ENCODE measurements at regions of chr11 and their contacts with region 1.

Region 1: GRCh38 chr11:15770798-15771414 is 585.4 kb downstream of the SOX6 start:
- H3K4me3 Mint-ChIP-seq: no peak overlapping the region
- H3K27ac Mint-ChIP-seq: peak overlapping the region; percentile 65
- H3K4me1 Mint-ChIP-seq: peaks cover 60% of the 10 kb centered on the region
- H3K27me3 Mint-ChIP-seq: peaks cover 19% of the 10 kb centered on the region

Region 2: GRCh38 chr11:15800111-15800800 is 29.4 kb after region 1 on chr11:
- intact Hi-C with region 1: loop called (anchors 5 kb)
- H3K4me3 Mint-ChIP-seq: peak overlapping the region; percentile 49
- H3K27ac Mint-ChIP-seq: peak overlapping the region; percentile 96
- H3K4me1 Mint-ChIP-seq: peaks cover 45% of the 10 kb centered on the region
- H3K27me3 Mint-ChIP-seq: no peaks in the 10 kb centered on the region

Region 3: DNA sequence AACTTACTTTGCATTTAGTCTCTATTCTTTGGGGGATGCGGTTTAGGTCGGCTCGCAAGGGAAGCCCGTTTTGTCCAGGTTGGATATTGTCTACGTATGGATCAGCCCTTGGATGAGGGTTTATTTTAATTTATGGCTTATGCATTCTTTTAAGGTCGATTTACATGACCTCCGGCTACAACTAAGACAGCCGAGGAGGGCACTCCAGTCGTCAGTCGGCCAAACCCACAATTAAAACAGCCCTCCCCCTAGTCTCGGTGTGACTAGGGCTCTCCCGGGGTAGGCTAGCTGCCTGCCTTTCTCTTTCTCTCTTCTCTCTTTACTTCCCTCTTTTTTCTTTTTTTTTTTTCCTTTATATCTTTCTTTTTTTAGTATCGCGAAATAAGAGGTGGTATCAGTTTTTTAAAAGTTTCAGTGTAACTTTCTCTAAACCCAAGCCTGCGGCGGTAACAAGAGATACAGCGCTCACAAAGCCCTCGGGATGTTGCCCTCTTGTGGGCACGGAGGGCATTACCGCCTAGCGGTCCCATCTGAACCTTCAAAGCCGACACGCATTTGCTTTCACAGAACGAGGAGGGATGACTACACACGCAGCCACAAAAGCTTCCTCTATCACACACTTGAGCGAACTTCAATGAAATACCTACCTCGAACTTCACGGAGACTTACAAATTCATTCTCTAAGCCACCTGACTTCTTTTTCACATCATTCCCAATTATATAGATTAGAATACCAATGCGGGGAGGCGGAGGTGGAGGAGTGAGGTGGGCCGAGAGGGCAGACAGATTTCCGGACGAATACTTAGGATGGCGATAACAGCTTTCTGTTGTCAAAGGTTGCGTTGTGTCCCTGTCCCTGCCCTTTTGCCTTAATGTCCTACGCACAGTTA is 835.2 kb after region 1 on chr11:
- intact Hi-C with region 1: loop called (anchors 10 kb)
- H3K4me3 Mint-ChIP-seq: peak overlapping the region; percentile 72
- H3K27ac Mint-ChIP-seq: peak overlapping the region; percentile 28
- H3K4me1 Mint-ChIP-seq: peaks cover 23% of the 10 kb centered on the region
- H3K27me3 Mint-ChIP-seq: peaks cover 31% of the 10 kb centered on the region